H1 (cell line): ENCODE measurements at regions of chr1 and their contacts with region 1.

Region 1: GRCh38 chr1:50929376-50929958 is 30.6 kb downstream of the FAF1 start:
- DNase-seq: no peak
- H3K4me3 ChIP-seq: no peak overlapping the region
- H3K27ac ChIP-seq: no peak overlapping the region
- H3K4me1 ChIP-seq: no peaks in the 10 kb centered on the region
- H3K27me3 ChIP-seq: no peaks in the 10 kb centered on the region
- CTCF ChIP-seq: peak in 2 of 3 experiments; percentile 17 to 39; a peak in 2 of 4 replicates
- EP300 ChIP-seq: no peak
- POLR2A ChIP-seq: no peak
- RAD21 ChIP-seq: peak in 1 of 2 experiments; percentile 32; a peak in 2 of 4 replicates

Region 2: DNA sequence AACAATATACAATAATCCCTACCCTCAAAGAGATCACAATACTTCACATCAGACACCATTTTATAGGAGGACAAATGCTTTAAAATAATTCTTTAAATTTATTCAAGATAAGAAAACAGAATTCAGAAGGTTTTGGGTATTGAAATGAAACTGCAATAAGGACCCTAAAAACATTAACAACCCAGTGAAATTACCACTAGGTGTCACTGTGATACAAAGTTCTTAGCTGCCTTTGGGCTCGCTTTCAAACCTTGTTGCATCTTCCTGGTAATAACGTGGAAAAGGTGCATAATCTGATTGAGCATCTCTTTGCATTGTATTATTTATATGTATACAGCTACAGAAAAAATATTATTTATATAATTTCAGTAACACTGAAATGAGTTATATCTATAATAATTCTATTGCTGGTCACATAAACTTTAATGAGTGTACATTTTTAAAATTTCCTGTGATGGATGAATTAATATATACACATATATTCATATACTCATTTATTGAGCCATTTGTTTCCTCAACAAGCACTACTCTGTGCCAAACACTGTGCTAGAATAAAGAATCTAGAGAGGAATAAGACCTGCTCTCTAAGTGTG is 154.6 kb before region 1 on chr1:
- CTCF ChIA-PET with region 1: interaction called, 12 read pairs
- POLR2A ChIA-PET with region 1: interaction called, 4 read pairs
- DNase-seq: no peak
- H3K4me3 ChIP-seq: no peak overlapping the region
- H3K27ac ChIP-seq: no peak overlapping the region
- H3K4me1 ChIP-seq: no peaks in the 10 kb centered on the region
- H3K27me3 ChIP-seq: no peaks in the 10 kb centered on the region
- CTCF ChIP-seq: peak in 2 of 3 experiments; percentile 41 to 65; a peak in 2 of 4 replicates
- EP300 ChIP-seq: no peak
- POLR2A ChIP-seq: no peak
- RAD21 ChIP-seq: peak; percentile 73 to 79

Region 3: GRCh38 chr1:50940291-50940690 is 10.8 kb after region 1 on chr1:
- CTCF ChIA-PET with region 1: interaction called, 30 read pairs
- POLR2A ChIA-PET with region 1: no interaction called
- DNase-seq: no peak
- H3K4me3 ChIP-seq: no peak overlapping the region
- H3K27ac ChIP-seq: no peak overlapping the region
- H3K4me1 ChIP-seq: no peaks in the 10 kb centered on the region
- H3K27me3 ChIP-seq: no peaks in the 10 kb centered on the region
- CTCF ChIP-seq: no peak
- EP300 ChIP-seq: no peak
- POLR2A ChIP-seq: no peak
- RAD21 ChIP-seq: no peak

Region 4: GRCh38 chr1:50959913-50960844 is 30.7 kb after region 1 on chr1 and contains the start of gene FAF1:
- CTCF ChIA-PET with region 1: interaction called, 13 read pairs
- POLR2A ChIA-PET with region 1: no interaction called
- DNase-seq: peak; percentile 97 to 98
- H3K4me3 ChIP-seq: peak within 1 kb of the TSS; percentile 89 to 100 (median 94)
- H3K27ac ChIP-seq: peak within 1 kb of the TSS; percentile 70; the same call in 1 of the 2 replicates
- H3K4me1 ChIP-seq: peaks cover 0 to 3% (median 0%) of the 10 kb centered on the region in 4 experiments; a peak in 2 of 7 replicates
- H3K27me3 ChIP-seq: peaks cover 0 to 3% (median 1%) of the 10 kb centered on the region in 4 experiments; a peak in 2 of 7 replicates
- CTCF ChIP-seq: peak; percentile 3 to 60 (median 57)
- EP300 ChIP-seq: peak in 1 of 2 experiments; percentile 65; a peak in 1 of 3 replicates
- POLR2A ChIP-seq: peak; percentile 83 to 89
- RAD21 ChIP-seq: peak; percentile 28 to 44; a peak in 3 of 4 replicates
- total RNA-seq, gene FAF1: 63.9 and 65.9 TPM in 2 replicates

Region 5: GRCh38 chr1:50978144-50978851 is 48.8 kb after region 1 on chr1:
- CTCF ChIA-PET with region 1: interaction called, 14 read pairs
- POLR2A ChIA-PET with region 1: no interaction called
- DNase-seq: peak; percentile 63 to 90
- H3K4me3 ChIP-seq: peak overlapping the region; percentile 7 to 67 (median 32); a peak in 7 of 8 replicates
- H3K27ac ChIP-seq: no peak overlapping the region
- H3K4me1 ChIP-seq: peaks cover 2 to 6% (median 4%) of the 10 kb centered on the region in 4 experiments; a peak in 5 of 7 replicates
- H3K27me3 ChIP-seq: peaks cover 37 to 86% (median 58%) of the 10 kb centered on the region in 4 experiments
- CTCF ChIP-seq: no peak
- EP300 ChIP-seq: peak in 1 of 2 experiments; percentile 51; a peak in 1 of 3 replicates
- POLR2A ChIP-seq: no peak
- RAD21 ChIP-seq: no peak

Region 6: GRCh38 chr1:50992532-50993318 is 63.3 kb after region 1 on chr1:
- CTCF ChIA-PET with region 1: no interaction called
- POLR2A ChIA-PET with region 1: no interaction called
- DNase-seq: no peak
- H3K4me3 ChIP-seq: no peak overlapping the region
- H3K27ac ChIP-seq: no peak overlapping the region
- H3K4me1 ChIP-seq: no peaks in the 10 kb centered on the region
- H3K27me3 ChIP-seq: no peaks in the 10 kb centered on the region
- CTCF ChIP-seq: no peak
- EP300 ChIP-seq: no peak
- POLR2A ChIP-seq: no peak
- RAD21 ChIP-seq: no peak

Region 7: DNA sequence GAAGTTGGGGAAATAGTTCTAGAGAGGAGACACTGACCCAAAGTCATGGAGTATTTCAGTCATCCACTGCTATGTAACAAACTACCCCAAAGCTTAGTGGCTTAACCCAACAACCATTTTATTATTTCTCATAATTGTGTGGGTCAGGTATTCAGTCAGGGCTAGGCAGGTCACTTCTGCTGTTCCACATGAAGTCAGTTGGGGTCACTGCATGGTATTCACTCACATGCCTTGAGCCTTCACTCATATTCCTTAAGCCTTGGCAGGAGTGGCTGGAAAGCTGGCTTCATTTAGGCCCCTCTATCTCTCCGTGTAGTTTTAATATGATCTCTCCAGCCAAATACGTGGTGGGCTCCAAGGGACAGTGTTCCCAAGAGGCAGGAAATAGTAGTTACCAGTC is 289.1 kb after region 1 on chr1:
- CTCF ChIA-PET with region 1: no interaction called
- POLR2A ChIA-PET with region 1: no interaction called
- DNase-seq: no peak
- H3K4me3 ChIP-seq: no peak overlapping the region
- H3K27ac ChIP-seq: no peak overlapping the region
- H3K4me1 ChIP-seq: no peaks in the 10 kb centered on the region
- H3K27me3 ChIP-seq: no peaks in the 10 kb centered on the region
- CTCF ChIP-seq: peak in 1 of 3 experiments; percentile 18; a peak in 1 of 4 replicates
- EP300 ChIP-seq: no peak
- POLR2A ChIP-seq: no peak
- RAD21 ChIP-seq: no peak; a peak in 1 of 4 replicates